ENCODE measurements at regions of chr6 and their contacts with region 1.

Region 1: DNA sequence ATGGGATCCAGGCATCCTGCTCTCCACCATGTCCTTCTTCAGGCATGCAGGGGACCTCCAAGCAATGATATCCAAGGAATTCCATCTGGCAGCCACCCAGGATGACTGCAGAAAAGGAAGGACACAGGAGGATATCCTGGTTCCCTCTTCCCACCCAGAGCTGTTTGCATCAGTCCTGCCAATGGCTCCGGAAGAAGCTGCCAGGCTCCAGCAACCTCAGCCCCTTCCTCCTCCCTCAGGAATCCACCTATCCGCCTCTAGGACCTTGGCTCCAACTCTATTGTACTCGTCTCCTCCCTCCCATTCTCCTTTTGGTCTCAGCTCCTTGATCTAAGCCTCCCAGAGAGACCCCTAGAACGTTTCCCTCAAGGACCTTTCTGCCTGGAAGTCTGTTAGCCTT is 733 bp upstream of the PSORS1C2 start:
- DNase-seq: peak; percentile 33
- H3K4me3 ChIP-seq: no peak overlapping the region
- H3K27ac ChIP-seq: no peak overlapping the region
- H3K4me1 ChIP-seq: peaks cover 15% of the 10 kb centered on the region
- H3K27me3 ChIP-seq: no peaks in the 10 kb centered on the region

Region 2: GRCh38 chr6:31193200-31193599 is 53.6 kb after region 1 on chr6:
- in situ Hi-C with region 1: loop called (anchors 5 kb)
- DNase-seq: no peak
- H3K4me3 ChIP-seq: no peak overlapping the region
- H3K27ac ChIP-seq: no peak overlapping the region
- H3K4me1 ChIP-seq: no peaks in the 10 kb centered on the region
- H3K27me3 ChIP-seq: no peaks in the 10 kb centered on the region

Region 3: DNA sequence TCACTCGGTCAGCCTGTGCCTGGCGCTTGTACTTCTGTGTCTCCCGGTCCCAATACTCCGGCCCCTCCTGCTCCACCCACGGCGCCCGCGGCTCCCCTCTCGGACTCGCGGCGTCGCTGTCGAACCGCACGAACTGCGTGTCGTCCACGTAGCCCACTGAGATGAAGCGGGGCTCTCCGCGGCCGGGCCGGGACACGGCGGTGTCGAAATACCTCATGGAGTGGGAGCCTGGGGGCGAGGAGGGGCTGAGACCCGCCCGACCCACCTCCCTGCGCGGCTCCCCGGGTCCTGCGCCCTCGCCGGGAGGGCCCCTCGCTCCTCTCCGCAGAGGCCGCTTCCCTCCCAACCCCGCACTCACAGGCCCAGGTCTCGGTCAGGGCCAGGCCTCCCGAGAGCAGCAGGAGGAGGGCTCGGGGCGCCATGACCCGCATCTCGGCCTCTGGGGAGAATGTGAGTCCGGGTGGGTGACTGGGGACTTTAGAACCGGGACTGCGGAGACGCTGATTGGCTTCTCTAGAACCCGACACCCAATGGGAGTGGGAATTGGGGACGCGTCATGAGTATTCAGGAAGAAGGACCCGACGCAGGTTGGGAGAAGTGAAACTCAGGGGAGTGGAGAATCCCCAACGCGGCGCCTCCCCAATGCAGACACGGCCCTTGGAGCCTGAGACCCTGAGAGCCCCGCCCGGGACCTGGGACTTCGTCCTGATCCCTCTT is 132.2 kb after region 1 on chr6 and contains the start of gene HLA-C:
- in situ Hi-C with region 1: no loop called
- DNase-seq: peak; percentile 98
- H3K4me3 ChIP-seq: peak within 1 kb of the TSS; percentile 73
- H3K27ac ChIP-seq: peak within 1 kb of the TSS; percentile 68
- H3K4me1 ChIP-seq: no peaks in the 10 kb centered on the region
- H3K27me3 ChIP-seq: 0 out of 2 replicates have a peak, but pooled peaks cover 1% of the 10 kb centered on the region
- total RNA-seq, gene HLA-C: 157 and 168 TPM in 2 replicates